ENCODE measurements at regions of chr21 and their contacts with region 1.

Region 1: DNA sequence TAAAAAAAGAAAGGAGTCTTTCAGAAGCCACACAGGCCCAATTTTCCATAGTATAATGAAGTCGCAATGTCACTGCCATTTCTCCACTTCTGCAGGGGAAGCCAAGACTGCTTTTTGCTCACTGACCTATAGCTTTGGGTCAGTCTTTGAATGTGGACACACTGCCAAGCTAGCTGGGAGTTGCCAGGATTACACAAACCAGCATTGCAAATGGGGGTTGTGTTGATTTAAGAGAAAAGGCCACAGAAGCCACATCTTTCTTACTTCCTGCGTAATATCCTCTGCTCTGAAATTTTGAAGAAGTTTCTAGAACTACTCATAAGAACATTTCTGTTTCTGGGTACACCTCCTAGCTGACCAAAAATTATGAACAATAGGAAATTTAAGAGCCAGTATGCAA is 45.8 kb upstream of the SAMSN1 start:
- DNase-seq: peak; percentile 75
- H3K4me3 Mint-ChIP-seq: peak overlapping the region; percentile 36
- H3K27ac Mint-ChIP-seq: peak overlapping the region; percentile 65
- H3K4me1 Mint-ChIP-seq: peaks cover 26% of the 10 kb centered on the region
- H3K27me3 Mint-ChIP-seq: no peaks in the 10 kb centered on the region

Region 2: GRCh38 chr21:14099570-14099969 is 492.3 kb before region 1 on chr21:
- intact Hi-C with region 1: no loop called
- DNase-seq: no peak
- H3K4me3 Mint-ChIP-seq: no peak overlapping the region
- H3K27ac Mint-ChIP-seq: no peak overlapping the region
- H3K4me1 Mint-ChIP-seq: no peaks in the 10 kb centered on the region
- H3K27me3 Mint-ChIP-seq: no peaks in the 10 kb centered on the region

Region 3: DNA sequence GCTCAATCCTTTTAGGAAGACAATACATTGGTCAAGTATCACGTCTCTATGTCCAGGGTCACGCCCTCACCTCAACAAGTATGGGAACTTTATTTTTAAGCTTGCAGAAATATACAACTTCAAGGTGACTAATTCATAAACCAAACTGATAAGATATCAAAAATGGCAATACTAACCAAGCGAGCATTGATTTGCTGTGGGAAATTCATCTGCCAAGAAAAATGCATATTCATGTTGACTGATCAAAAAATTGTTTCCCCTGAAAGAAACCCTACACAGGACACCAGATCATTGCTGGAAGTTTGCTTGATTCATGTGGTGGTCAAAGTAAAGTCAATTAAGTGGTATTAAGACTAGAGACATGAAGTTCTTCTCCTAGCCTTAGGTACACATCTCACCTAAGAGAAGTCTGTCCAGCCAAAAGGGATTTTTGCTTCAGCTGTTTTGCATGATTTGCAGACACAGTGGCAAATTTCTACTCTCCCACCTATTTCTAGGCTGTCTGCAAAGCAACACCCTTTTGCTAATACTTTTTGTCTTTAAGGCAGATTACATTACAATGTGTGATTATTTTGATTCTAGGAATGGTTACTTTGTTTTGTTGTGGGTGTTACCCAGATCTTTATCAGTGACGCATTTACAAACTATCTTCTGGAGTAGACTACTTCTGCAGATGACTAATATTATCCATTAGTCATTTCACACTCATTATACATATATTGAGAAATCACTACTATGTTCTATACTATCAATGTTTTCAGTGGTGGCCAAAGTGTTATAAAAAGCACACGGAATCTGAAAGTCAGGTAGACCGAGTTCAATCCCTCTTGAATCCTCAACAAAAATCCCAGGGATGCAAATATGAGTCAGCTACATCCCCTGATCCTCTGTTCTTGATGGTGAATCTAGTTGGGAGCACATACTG is 58.1 kb before region 1 on chr21:
- intact Hi-C with region 1: loop called (anchors 1 kb)
- DNase-seq: peak; percentile 79
- H3K4me3 Mint-ChIP-seq: peak overlapping the region; percentile 85
- H3K27ac Mint-ChIP-seq: peak overlapping the region; percentile 100
- H3K4me1 Mint-ChIP-seq: peaks cover 59% of the 10 kb centered on the region
- H3K27me3 Mint-ChIP-seq: no peaks in the 10 kb centered on the region

Region 4: GRCh38 chr21:14572204-14572780 is 19.6 kb before region 1 on chr21:
- intact Hi-C with region 1: loop called (anchors 1 kb)
- DNase-seq: no peak
- H3K4me3 Mint-ChIP-seq: peak overlapping the region; percentile 64
- H3K27ac Mint-ChIP-seq: peak overlapping the region; percentile 80
- H3K4me1 Mint-ChIP-seq: peaks cover 44% of the 10 kb centered on the region
- H3K27me3 Mint-ChIP-seq: no peaks in the 10 kb centered on the region

Region 5: DNA sequence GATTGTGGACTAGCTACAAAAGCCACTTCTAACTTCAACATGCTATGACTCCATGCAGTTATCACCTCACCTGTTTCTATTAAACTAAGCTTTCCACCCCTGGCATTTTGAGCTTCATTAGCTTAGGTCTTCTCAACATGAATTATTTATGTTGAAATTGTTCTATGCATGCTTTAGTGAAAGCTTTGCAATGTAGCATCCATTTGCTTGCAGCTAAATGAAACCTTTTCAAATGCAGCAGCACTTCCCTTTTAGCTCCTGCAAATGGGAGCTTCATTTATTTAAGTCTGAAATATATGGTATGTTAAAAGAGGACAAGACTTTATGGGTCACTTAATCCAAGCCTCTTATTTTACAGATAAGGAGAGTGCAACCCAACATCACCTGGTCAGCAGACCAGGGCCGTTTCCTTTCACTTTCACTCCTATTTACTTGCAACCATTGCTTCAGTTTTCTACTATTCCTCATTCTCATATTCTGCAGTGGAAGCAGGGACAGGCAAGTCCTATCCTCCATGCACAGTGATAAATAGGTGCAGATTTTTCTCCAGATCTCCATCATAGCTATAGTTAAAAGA is 10.6 kb after region 1 on chr21:
- intact Hi-C with region 1: loop called (anchors 1 kb)
- DNase-seq: no peak
- H3K4me3 Mint-ChIP-seq: peak overlapping the region; percentile 67
- H3K27ac Mint-ChIP-seq: peak overlapping the region; percentile 42
- H3K4me1 Mint-ChIP-seq: peaks cover 29% of the 10 kb centered on the region
- H3K27me3 Mint-ChIP-seq: no peaks in the 10 kb centered on the region

Region 6: DNA sequence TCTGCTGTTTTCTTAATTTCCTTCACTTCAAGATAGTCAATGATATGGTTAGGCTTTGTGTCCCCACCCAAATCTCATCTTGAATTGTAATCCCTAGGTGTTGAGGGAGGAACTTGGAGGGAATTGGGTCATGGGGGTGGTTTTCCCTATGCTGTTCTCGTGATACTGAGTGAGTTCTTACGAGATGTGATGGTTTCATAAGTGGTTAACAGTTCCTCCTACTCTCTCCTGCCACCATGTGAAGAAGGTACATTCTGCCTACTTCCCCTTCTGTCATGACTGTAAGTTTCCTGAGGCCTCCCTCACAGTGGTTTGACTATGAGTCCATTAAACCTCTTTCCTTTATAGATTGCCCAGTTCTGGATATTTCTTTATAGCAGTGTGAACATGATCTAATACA is 28.3 kb after region 1 on chr21:
- intact Hi-C with region 1: loop called (anchors 2 kb)
- DNase-seq: no peak
- H3K4me3 Mint-ChIP-seq: no peak overlapping the region
- H3K27ac Mint-ChIP-seq: peak overlapping the region; percentile 73
- H3K4me1 Mint-ChIP-seq: peaks cover 25% of the 10 kb centered on the region
- H3K27me3 Mint-ChIP-seq: no peaks in the 10 kb centered on the region

Region 7: DNA sequence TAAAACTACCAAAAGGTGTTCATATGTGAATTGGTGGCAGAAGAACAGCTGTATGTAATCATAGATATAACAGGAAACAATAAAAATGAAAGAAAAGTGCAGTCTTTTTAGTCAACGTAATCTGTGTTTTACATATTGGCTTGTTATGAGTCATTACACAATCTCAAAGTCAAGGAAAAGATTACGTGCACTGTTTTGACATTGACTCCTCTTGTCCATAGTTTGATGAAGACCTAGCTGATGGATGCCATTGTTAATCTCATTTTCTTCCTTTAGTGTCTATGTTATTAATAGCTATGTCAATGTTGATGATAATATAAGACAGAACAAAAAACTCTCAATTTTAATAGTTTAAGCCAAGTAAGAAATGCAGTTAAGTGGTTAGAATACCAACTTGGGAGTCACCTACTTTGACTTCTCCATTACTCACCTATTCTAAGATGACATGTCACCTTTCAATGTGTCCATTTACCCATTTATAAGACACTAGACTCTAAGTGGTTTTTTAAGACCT is 38.7 kb after region 1 on chr21:
- intact Hi-C with region 1: loop called (anchors 2 kb)
- DNase-seq: no peak
- H3K4me3 Mint-ChIP-seq: no peak overlapping the region
- H3K27ac Mint-ChIP-seq: peak overlapping the region; percentile 78
- H3K4me1 Mint-ChIP-seq: peaks cover 24% of the 10 kb centered on the region
- H3K27me3 Mint-ChIP-seq: no peaks in the 10 kb centered on the region

Region 8: GRCh38 chr21:14737922-14738321 is 146.0 kb after region 1 on chr21:
- intact Hi-C with region 1: no loop called
- DNase-seq: peak; percentile 87
- H3K4me3 Mint-ChIP-seq: no peak overlapping the region
- H3K27ac Mint-ChIP-seq: no peak overlapping the region
- H3K4me1 Mint-ChIP-seq: peaks cover 37% of the 10 kb centered on the region
- H3K27me3 Mint-ChIP-seq: no peaks in the 10 kb centered on the region

Region 9: GRCh38 chr21:15534450-15534886 is 942.6 kb after region 1 on chr21:
- intact Hi-C with region 1: no loop called
- DNase-seq: no peak
- H3K4me3 Mint-ChIP-seq: no peak overlapping the region
- H3K27ac Mint-ChIP-seq: no peak overlapping the region
- H3K4me1 Mint-ChIP-seq: peaks cover 7% of the 10 kb centered on the region
- H3K27me3 Mint-ChIP-seq: peaks cover 6% of the 10 kb centered on the region